Common myeloid progenitor, CD34-positive (primary cell): ENCODE measurements at regions of chr21 and their contacts with region 1.

Region 1: GRCh38 chr21:42537106-42537742 is 23.6 kb downstream of the SLC37A1 start:
- DNase-seq: peak; percentile 63 to 79 (median 76)
- H3K4me3 ChIP-seq: no peak overlapping the region
- H3K27ac ChIP-seq: no peak overlapping the region
- H3K4me1 ChIP-seq: peaks cover 8 to 56% (median 37%) of the 10 kb centered on the region in 4 experiments
- H3K27me3 ChIP-seq: no peaks in the 10 kb centered on the region

Region 2: DNA sequence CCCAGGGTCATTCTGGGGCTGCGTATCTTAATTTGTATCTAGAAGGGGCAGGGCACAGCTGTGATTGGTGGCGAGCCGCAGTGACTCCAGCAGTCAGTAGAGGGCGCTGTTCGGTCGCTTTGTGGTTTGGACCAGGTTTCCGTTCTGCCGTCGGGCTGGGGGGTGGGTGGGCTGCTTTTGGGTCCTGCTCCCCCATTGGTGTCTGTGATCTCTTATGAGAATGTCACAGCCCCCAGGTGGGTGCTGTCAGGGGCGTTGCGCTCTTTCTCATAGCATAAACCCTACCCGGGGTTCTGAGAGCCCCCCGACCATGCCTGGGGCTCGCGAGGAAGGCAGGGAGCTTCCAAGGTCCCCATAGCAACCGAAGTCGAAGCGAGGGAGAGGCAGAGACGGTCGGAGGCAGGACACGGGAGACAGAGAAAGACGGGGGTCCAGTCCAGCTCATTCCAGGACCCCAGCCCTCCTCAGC is 227.4 kb before region 1 on chr21:
- CTCF ChIA-PET with region 1: interaction called, 19 read pairs
- POLR2A ChIA-PET with region 1: no interaction called
- DNase-seq: peak; percentile 63 to 89 (median 87)
- H3K4me3 ChIP-seq: peak overlapping the region in 5 of 7 experiments; percentile 23 to 62 (median 46)
- H3K27ac ChIP-seq: no peak overlapping the region
- H3K4me1 ChIP-seq: peaks cover 13 to 51% (median 46%) of the 10 kb centered on the region in 4 experiments
- H3K27me3 ChIP-seq: no peaks in the 10 kb centered on the region

Region 3: DNA sequence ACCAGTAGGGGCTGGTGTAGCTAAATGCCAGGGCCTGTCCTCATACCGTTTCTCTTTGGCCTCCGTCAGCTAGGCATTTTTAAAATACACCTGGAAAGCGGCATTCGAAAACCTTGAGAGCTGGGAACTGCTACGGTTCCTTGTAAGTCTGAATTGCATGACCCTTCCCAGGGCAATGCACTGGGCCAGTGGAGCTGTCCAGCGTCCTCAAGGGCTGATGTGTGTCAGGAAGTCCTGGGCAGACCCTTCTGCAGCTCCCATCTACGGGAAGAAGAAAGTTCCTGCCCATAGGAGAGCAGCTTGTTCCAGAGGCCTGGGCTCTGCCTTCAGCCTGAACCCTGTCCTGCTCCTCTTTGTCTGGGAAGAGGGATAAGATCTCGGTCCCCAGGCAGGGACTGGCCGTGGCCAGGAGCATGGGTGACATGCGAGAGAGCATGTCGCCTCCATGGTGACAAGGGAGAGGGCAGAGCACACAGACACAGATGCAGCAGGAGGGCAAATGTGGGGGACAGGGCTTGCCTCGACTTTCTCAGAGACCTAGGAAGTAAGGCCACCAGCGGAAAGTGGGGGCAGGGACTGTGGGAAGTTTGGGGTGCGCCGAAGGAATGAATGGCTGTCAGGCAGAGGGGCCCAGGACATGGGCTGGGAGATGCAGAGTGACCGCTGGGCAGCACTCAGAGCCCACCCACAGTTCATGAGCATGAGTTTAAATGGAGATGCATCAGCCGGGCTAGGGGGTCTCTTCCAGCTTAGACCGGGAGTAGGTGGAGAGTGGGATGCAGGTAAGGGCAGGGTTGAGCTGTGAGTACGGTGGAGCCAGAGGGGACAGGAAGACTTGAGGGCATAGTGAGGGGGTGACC is 99.2 kb before region 1 on chr21:
- CTCF ChIA-PET with region 1: no interaction called
- POLR2A ChIA-PET with region 1: no interaction called
- DNase-seq: no peak
- H3K4me3 ChIP-seq: no peak overlapping the region
- H3K27ac ChIP-seq: no peak overlapping the region
- H3K4me1 ChIP-seq: no peaks in the 10 kb centered on the region
- H3K27me3 ChIP-seq: no peaks in the 10 kb centered on the region

Region 4: DNA sequence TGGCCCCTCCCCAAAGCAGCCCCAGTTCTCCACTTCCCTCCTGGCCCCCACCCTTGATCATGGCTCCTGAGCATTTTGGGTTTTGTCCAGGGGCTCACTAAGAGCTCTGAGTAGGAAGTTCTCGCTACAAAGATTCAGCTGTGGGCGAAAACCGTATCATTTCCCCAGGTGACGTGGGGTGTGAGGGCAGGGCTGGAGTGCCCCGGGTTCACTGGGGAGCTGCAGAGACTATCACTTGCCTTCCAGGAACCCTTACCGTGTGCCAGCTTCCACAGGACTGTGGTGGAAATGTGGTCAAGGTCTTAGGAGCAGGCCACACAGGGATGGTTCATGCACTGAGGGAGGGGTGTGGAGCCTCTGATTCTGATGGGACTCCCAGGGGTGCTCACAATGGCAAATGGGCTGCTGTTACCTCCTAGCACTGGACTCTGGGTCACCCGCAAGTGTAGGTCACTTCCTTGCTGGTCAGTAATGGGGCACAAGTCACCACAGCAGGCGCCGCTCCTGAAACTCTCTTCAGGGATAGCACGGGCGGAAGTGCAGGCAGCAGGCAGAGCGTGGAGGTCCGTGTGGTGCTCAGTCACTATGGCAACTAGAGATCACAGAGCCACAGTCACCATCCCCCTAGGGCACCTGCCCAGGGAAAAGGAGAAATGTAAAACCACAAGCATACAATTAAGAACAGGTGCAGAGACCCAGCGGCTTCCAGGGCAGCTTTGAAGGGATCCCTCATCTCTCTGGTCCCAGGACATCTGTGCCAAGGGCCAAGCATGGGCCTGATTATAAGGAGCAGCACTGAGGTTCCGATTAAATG is 76.6 kb before region 1 on chr21:
- CTCF ChIA-PET with region 1: interaction called, 61 read pairs
- POLR2A ChIA-PET with region 1: no interaction called
- DNase-seq: peak; percentile 85 to 95 (median 95)
- H3K4me3 ChIP-seq: peak overlapping the region in 1 of 7 experiments; percentile 38
- H3K27ac ChIP-seq: peak overlapping the region; percentile 84 to 89
- H3K4me1 ChIP-seq: peaks cover 24 to 70% (median 61%) of the 10 kb centered on the region in 4 experiments
- H3K27me3 ChIP-seq: no peaks in the 10 kb centered on the region

Region 5: DNA sequence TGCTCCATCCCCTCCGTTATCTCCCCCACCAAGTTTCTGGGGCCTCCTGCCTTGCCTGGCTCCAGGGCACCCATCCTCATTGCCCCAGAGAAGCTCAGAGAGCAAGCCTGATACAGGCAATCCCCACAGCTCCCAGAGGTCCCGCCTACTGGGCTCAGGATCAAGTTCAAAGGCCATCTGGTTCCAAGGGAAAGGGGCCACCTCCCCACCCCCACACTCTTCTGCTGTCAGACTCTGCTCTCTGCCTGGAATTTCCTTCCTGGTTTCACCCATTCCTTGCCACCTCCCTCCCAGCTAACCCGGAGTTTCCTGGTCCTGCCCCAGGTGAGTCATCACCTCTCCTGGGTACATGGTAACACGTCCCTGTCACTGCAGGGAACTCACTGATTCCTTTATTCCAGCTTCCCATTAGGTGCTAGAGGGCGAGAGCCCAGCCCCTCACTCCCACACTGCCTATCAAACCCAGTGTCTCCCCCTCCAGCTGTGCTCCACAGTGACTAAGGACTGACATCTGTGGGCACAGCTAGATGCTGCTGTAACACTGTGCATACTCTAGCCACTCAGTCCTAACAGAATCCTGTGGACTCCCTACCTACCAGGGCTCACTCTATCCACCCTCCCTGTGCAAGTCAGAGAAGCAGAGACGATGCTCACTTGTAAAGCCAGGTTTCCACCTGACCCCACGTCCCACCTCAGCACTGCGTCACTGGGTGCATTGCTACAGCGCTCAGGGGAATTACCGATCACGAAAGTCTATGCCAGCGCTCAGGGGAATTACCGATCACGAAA is 63.0 kb before region 1 on chr21:
- CTCF ChIA-PET with region 1: interaction called, 61 read pairs
- POLR2A ChIA-PET with region 1: no interaction called
- DNase-seq: peak in 2 of 3 donors; percentile 44
- H3K4me3 ChIP-seq: no peak overlapping the region
- H3K27ac ChIP-seq: no peak overlapping the region
- H3K4me1 ChIP-seq: peaks cover 0 to 19% (median 14%) of the 10 kb centered on the region in 4 experiments
- H3K27me3 ChIP-seq: no peaks in the 10 kb centered on the region

Region 6: GRCh38 chr21:42524349-42525151 is 12.7 kb before region 1 on chr21:
- CTCF ChIA-PET with region 1: interaction called, 25 read pairs
- POLR2A ChIA-PET with region 1: no interaction called
- DNase-seq: peak; percentile 74 to 96 (median 94)
- H3K4me3 ChIP-seq: peak overlapping the region in 3 of 7 experiments; percentile 15 to 59 (median 40)
- H3K27ac ChIP-seq: peak overlapping the region; percentile 90
- H3K4me1 ChIP-seq: peaks cover 7 to 85% (median 56%) of the 10 kb centered on the region in 4 experiments
- H3K27me3 ChIP-seq: no peaks in the 10 kb centered on the region

Region 7: GRCh38 chr21:42746593-42747275 is 209.5 kb after region 1 on chr21:
- CTCF ChIA-PET with region 1: no interaction called
- POLR2A ChIA-PET with region 1: no interaction called
- DNase-seq: peak in 2 of 3 donors; percentile 70 to 75
- H3K4me3 ChIP-seq: peak overlapping the region in 2 of 7 experiments; percentile 3 to 19
- H3K27ac ChIP-seq: no peak overlapping the region
- H3K4me1 ChIP-seq: peaks cover 0 to 27% (median 23%) of the 10 kb centered on the region in 4 experiments
- H3K27me3 ChIP-seq: no peaks in the 10 kb centered on the region